BJ (cell line): ENCODE measurements at regions of chr7 and their contacts with region 1.

Region 1: GRCh38 chr7:73557108-73557396 is 438 bp downstream of the BCL7B start:
- DNase-seq: peak; percentile 67
- H3K4me3 ChIP-seq: peak overlapping the region; percentile 97
- H3K27me3 ChIP-seq: no peaks in the 10 kb centered on the region
- CTCF ChIP-seq: no peak

Region 2: DNA sequence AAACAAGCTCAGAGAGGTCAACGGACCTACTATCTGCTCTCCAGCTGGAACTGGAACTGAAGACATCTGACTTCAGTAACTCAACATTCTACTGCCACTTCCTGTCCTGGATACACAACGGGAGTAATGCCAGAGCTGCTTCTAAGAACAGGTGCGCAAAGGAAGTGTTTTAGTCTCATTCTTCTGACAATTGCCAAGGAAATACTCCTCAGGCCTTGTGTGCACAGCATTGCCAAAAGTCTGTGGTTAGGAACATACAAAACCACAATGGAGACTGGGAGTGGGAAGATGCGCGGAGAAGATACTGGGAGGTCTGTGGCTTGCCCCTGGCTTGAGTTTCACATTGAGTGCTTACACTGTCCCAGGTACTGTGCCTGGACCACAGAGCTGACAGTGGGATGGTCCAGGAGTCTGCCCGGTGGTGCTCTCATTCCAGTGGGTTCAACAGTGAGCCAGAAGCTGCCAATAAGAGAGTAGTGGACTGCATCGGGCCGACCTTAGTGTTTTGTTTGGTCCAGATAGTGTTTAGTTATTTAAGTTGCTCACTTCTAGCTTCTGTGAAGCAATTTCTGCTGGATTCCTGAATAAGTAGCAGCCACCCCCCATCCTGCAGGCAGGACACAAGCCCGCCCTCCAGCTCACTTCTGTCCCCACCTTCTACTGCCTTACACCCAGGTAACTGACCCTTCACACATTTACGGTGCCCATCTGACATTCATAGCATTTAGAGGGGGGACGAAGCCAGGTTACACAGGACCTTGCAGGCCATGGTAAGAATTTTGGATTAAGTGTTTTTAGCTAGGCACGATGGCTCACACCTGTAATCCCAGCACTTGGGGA is 11.0 kb after region 1 on chr7:
- CTCF ChIA-PET with region 1: no interaction called
- POLR2A ChIA-PET with region 1: no interaction called
- DNase-seq: no peak
- H3K4me3 ChIP-seq: no peak overlapping the region
- H3K27me3 ChIP-seq: no peaks in the 10 kb centered on the region
- CTCF ChIP-seq: no peak

Region 3: DNA sequence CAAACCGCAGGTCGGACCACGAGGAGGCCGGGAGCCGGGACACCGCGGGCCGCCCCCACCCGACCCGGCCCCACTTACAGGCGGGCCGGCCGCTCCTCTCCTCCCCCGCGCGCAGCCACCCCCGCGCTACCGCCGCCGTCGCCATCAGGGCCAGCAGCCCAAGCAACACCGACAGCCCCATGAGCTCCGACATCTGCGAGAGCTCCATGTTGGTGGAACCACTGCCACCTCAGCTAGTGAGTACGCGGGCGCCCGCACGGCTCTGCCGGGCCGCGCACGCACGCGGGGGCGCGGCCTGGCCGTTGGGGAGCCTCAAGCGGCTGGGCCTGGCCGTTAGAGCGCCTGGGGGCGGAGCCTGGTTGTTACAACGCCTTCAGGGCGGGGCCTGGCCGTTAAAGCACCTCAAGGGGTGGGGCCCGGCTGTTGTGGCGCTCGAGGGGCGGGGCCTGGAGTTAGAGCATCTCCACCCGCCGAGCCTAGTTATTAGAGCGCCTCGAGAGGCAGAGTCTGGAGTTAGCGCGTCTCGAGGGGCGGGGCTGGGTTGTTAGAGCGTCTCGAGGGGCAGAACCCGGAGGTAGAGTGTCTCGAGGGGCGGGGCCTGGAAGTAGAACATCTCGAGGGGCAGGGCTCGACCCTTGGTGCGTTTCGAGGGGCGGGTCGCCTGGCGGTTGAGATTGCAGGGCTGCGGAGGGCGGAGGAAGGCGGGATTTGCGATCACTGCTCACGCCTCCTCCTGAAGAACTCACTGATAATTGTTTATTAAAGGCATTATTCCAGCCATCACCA is 21.5 kb after region 1 on chr7 and contains the start of gene TBL2:
- CTCF ChIA-PET with region 1: interaction called, 3 read pairs
- POLR2A ChIA-PET with region 1: interaction called, 12 read pairs
- DNase-seq: peak; percentile 88
- H3K4me3 ChIP-seq: peak within 1 kb of the TSS; percentile 90
- H3K27me3 ChIP-seq: no peaks in the 10 kb centered on the region
- CTCF ChIP-seq: peak; percentile 38; the same call in 1 of the 2 replicates
- polyA plus RNA-seq, gene TBL2: 40.6 and 63.7 TPM in 2 replicates

Region 4: GRCh38 chr7:74656837-74657691 is 1100.0 kb after region 1 on chr7:
- CTCF ChIA-PET with region 1: no interaction called
- POLR2A ChIA-PET with region 1: interaction called, 13 read pairs
- DNase-seq: peak; percentile 61
- H3K4me3 ChIP-seq: peak overlapping the region; percentile 82
- H3K27me3 ChIP-seq: no peaks in the 10 kb centered on the region
- CTCF ChIP-seq: peak; percentile 40; the same call in 1 of the 2 replicates